ENCODE measurements at regions of chr2 and their contacts with region 1.

Region 1: DNA sequence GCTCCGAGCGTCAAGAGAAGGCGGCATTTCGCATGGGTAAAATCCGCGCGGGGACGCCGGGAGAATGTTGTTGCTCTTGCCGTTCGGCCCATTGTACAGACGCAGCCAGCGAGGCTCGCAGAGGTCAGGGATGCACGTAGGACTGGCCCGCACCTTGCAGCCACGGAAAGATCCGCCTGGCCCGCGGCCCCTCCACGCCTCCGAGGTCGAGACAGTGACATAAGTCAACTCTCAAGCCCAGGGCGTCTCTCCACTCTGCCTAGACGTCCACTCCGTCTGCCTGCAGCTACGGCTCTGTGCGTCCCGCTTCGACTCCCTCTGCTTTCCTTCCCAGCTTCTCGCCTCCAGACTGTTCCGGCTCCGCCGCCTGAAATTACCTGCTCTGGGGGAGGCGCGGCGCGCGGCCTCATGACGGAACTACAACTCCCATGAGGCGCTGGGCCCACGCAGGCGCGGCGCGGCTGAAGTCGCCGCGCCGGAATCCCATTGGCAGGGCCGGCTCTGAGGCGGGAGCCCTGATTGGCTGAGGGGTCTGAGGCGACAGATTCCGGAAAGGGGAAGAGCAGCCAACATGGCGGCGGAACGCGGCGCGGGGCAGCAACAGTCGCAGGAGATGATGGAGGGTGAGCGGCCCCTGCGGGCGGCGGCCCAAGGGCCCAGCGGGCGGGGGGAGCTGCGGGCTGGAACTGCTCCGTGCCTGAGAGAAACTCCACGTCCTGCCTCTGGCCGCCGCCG is at the start of gene PPP1R7:
- DNase-seq: peak; percentile 98
- H3K4me3 Mint-ChIP-seq: peak within 1 kb of the TSS; percentile 96
- H3K27ac Mint-ChIP-seq: peak within 1 kb of the TSS; percentile 97
- H3K4me1 Mint-ChIP-seq: peaks cover 49% of the 10 kb centered on the region
- H3K27me3 Mint-ChIP-seq: no peaks in the 10 kb centered on the region
- total RNA-seq, gene PPP1R7: 111 and 113 TPM in 2 replicates

Region 2: GRCh38 chr2:240566203-240567136 is 583.6 kb before region 1 on chr2:
- intact Hi-C with region 1: loop called (anchors 5 kb)
- DNase-seq: peak; percentile 99
- H3K4me3 Mint-ChIP-seq: peak overlapping the region; percentile 98
- H3K27ac Mint-ChIP-seq: peak overlapping the region; percentile 99
- H3K4me1 Mint-ChIP-seq: peaks cover 63% of the 10 kb centered on the region
- H3K27me3 Mint-ChIP-seq: no peaks in the 10 kb centered on the region

Region 3: DNA sequence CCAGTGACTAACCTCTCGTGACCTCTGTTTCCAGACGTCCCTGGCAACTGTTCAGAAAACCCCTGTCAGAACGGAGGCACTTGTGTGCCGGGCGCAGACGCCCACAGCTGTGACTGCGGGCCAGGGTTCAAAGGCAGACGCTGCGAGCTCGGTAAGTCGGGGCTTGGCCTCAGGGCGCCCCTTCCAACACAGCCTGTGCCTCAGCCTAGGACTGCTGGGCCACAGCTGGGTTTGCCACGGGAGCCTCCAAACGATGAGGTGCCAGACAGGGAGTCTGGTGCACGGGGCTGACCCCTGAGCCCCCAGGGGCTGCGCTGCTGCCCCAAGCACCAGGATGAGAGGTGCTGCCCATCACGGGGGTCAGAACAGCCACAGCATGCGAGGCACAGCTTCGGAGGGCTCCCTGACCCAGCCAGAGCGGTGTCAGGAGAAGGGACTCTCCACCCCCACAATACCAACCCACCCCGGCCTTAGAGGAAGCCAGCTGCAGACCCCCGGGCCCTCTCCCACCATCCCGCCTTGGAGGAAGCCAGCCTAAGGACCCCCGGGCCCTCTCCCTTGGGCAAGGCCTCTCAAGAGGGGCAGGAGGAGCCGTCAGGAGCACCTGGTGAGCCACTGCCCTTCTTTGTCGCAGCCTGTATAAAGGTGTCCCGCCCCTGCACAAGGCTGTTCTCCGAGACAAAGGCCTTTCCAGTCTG is 68.3 kb before region 1 on chr2:
- intact Hi-C with region 1: loop called (anchors 1 kb)
- DNase-seq: no peak
- H3K4me3 Mint-ChIP-seq: no peak overlapping the region
- H3K27ac Mint-ChIP-seq: no peak overlapping the region
- H3K4me1 Mint-ChIP-seq: no peaks in the 10 kb centered on the region
- H3K27me3 Mint-ChIP-seq: no peaks in the 10 kb centered on the region

Region 4: GRCh38 chr2:241102239-241102803 is 47.8 kb before region 1 on chr2 and contains the start of gene MTERF4:
- intact Hi-C with region 1: loop called (anchors 1 kb)
- DNase-seq: peak; percentile 97
- H3K4me3 Mint-ChIP-seq: peak within 1 kb of the TSS; percentile 94
- H3K27ac Mint-ChIP-seq: peak within 1 kb of the TSS; percentile 98
- H3K4me1 Mint-ChIP-seq: peaks cover 29% of the 10 kb centered on the region
- H3K27me3 Mint-ChIP-seq: no peaks in the 10 kb centered on the region
- total RNA-seq, gene MTERF4: 39.3 and 43.9 TPM in 2 replicates

Region 5: DNA sequence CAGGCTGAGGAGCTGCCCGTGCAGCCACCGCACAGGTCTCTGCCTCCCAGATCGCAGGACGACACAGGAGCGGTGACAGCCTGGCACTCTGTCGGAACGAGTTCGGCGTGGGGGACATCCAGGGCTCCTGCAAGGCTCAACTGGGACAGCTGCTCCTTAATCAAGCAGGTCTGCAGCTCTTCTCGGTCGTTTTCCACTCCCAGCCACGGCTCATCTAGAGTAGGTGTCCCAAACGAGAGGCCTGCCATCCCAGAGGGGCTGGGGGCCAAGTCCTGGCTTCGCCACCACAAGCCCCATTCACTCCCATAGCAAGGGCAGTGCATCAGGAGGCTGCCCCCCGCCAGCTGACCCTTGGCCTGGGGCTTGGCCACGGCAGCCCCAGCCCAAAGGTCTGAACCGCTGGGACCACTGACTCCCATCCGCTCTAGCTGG is 23.3 kb before region 1 on chr2:
- intact Hi-C with region 1: loop called (anchors 1 kb)
- DNase-seq: no peak
- H3K4me3 Mint-ChIP-seq: no peak overlapping the region
- H3K27ac Mint-ChIP-seq: peak overlapping the region; percentile 97
- H3K4me1 Mint-ChIP-seq: peaks cover 24% of the 10 kb centered on the region
- H3K27me3 Mint-ChIP-seq: no peaks in the 10 kb centered on the region

Region 6: GRCh38 chr2:241137276-241138190 is 12.6 kb before region 1 on chr2:
- intact Hi-C with region 1: no loop called
- DNase-seq: no peak
- H3K4me3 Mint-ChIP-seq: no peak overlapping the region
- H3K27ac Mint-ChIP-seq: no peak overlapping the region
- H3K4me1 Mint-ChIP-seq: peaks cover 3% of the 10 kb centered on the region
- H3K27me3 Mint-ChIP-seq: no peaks in the 10 kb centered on the region

Region 7: DNA sequence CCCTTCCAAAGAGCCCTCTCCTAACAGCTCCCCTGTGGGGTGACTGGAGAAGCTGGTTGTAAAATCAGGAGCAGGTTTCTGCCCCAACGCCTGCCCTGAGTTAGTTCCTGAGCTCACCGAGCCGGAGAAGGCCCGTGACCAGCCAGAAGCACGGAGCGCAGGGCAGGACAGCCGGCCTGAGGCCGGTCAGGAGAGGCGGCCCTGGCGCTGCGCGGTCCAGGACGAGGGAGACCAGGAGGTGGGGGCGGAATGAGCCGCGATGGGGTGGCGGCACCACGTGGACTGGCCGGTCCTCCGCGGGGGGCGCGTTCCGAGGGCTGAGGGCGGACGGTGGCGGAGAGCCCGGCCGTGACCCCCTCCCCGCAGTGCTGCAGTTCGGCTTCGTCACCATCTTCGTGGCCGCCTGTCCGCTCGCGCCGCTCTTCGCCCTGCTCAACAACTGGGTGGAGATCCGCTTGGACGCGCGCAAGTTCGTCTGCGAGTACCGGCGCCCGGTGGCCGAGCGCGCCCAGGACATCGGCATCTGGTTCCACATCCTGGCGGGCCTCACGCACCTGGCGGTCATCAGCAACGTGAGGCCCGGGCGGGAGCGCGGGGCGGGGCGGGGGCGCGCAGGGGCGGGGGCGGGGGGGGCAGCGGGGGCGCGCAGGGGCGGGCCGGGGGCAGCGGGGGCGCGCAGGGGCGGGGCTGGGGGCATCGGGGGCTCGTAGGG is 67.4 kb after region 1 on chr2:
- intact Hi-C with region 1: loop called (anchors 2 kb)
- DNase-seq: peak; percentile 82
- H3K4me3 Mint-ChIP-seq: peak overlapping the region; percentile 81
- H3K27ac Mint-ChIP-seq: peak overlapping the region; percentile 73
- H3K4me1 Mint-ChIP-seq: peaks cover 10% of the 10 kb centered on the region
- H3K27me3 Mint-ChIP-seq: peaks cover 24% of the 10 kb centered on the region

Region 8: GRCh38 chr2:241355983-241356870 is 206.1 kb after region 1 on chr2 and contains the start of gene FARP2:
- intact Hi-C with region 1: loop called (anchors 5 kb)
- DNase-seq: peak; percentile 98
- H3K4me3 Mint-ChIP-seq: peak within 1 kb of the TSS; percentile 79
- H3K27ac Mint-ChIP-seq: peak within 1 kb of the TSS; percentile 76
- H3K4me1 Mint-ChIP-seq: peaks cover 33% of the 10 kb centered on the region
- H3K27me3 Mint-ChIP-seq: no peaks in the 10 kb centered on the region
- total RNA-seq, gene FARP2: 36.5 and 43.1 TPM in 2 replicates

Measured in activated CD4-positive, alpha-beta T cell treated with anti-CD3 and anti-CD28 coated beads, Interleukin-2, amount 10 ng/mL, durations not matched to agents 24 days and 14 days (primary cell).